Activated T-helper 2 cell treated with anti-CD3 and anti-CD28 coated beads, Interferon-gamma antibody, Interleukin-2, Interleukin-4, amounts not matched to agents 10 μg/mL and 5 μg/mL and 100 μg/mL, durations not matched to agents 14 hours and 24 hours and 36 hours (primary cell): ENCODE measurements at regions of chrX and their contacts with region 1.

Region 1: DNA sequence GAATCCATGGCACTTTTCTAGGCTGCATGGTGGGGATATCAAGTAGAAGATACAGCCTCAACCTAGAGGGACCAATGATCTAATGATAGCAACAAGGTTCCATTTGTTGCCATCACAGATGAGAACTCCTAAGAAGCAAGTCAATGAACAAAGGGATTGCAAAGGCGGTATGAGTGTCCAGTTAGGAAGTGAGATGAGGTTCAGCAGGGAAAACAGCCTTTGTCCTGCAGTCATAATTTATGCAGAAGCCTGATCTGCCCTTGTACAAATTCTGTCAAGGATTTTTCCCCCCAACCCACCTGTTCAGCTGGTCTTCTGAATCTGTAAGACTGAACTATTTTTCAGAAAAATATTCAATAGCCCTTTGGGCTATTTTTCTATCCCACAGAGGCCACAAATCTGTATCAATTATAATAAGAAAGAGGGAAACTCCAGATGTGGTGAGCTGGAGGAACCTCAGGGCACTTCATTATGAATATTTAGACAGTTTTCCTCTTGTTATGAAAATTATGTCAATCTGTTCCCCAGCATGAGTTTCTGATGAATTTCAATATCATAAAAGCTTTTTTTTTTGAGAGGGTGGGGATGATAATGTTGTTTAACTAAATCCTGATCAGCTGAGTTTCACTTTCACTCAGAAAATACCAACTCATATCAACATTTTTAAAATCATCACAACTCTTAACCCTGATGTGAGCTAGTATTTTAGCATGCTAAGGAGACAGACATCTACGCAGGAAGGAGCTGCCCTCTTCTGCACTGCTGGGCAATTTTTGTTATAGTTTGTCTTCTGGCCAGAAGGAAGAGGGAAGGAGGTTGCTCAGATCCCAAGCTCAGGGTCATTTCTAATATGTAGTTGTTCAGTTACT is 127.2 kb upstream of the MAP3K15 start:
- DNase-seq: no peak
- H3K4me3 Mint-ChIP-seq: no peak overlapping the region
- H3K27ac Mint-ChIP-seq: peak overlapping the region; percentile 69
- H3K4me1 Mint-ChIP-seq: peaks cover 18% of the 10 kb centered on the region
- H3K27me3 Mint-ChIP-seq: no peaks in the 10 kb centered on the region

Region 2: GRCh38 chrX:19440713-19441112 is 201.8 kb before region 1 on chrX:
- intact Hi-C with region 1: no loop called
- DNase-seq: no peak
- H3K4me3 Mint-ChIP-seq: no peak overlapping the region
- H3K27ac Mint-ChIP-seq: no peak overlapping the region
- H3K4me1 Mint-ChIP-seq: no peaks in the 10 kb centered on the region
- H3K27me3 Mint-ChIP-seq: no peaks in the 10 kb centered on the region

Region 3: DNA sequence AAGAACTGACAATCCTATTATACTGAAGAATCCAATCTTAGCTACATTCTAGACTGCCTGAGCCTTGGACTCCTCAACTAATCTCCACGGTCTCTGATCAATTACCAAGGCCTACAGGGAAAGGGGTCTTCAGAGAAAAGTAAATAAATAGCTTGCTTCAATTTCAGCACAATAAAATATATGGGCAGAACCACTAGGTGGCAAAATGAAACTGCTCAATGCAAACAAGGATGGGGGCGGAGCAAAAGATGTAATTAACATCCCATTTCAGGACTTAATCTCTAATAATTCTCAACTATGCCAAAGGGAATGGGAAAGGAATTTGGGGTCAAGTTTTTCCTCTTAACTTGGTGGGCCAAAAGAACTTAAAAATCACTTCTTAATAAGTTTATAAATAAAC is 48.8 kb before region 1 on chrX:
- intact Hi-C with region 1: loop called (anchors 1 kb)
- DNase-seq: no peak
- H3K4me3 Mint-ChIP-seq: no peak overlapping the region
- H3K27ac Mint-ChIP-seq: peak overlapping the region; percentile 12
- H3K4me1 Mint-ChIP-seq: peaks cover 15% of the 10 kb centered on the region
- H3K27me3 Mint-ChIP-seq: no peaks in the 10 kb centered on the region